ENCODE measurements at regions of chr9 and their contacts with region 1.

Region 1: DNA sequence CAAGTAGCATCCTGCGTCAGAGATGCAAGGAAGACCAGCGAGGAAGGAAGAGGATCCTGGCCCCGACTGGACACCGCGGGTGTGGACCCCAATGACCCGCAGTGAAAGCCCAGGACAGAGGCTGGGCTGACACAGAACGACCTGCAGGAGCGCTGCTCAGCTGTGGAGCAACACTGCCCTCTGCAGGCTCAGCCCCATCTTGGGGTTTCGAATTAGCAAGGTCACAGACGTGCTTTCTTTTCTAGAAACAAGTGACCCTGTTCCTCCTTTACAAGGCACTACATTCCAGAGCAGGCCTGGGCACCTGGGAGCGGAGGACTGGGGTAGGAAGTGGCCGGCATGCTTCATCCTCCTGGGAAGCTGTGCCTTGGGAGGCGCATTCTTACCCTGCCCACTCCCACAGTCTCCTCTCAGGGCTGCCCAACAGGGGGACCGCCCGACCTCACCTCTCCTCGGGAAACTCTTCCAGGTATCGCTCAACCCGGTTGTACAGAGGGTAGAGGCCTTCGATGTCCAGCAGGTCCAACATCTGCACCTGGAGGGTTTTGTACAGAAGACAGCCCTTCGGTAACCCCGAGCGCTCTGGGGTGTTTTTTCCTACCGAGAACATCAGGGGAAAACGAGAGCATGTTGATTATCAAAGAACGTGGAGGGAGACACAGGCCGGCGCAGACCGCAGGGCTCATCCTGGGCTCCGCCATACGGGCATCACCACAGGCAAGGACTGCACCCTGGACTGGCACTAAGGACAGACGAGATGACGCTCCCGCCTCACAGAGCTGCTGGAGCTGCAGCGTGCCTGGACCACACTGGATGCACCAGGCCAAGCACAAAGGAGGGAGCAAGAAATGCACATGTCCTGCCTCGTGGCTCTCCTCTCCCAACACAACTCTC is 35.0 kb downstream of the IPPK start:
- DNase-seq: peak; percentile 78 to 92
- ATAC-seq: peak; percentile 96 to 98
- H3K4me3 ChIP-seq: no peak overlapping the region
- H3K27ac ChIP-seq: no peak overlapping the region
- H3K4me1 ChIP-seq: no peaks in the 10 kb centered on the region
- CTCF ChIP-seq: peak; percentile 95
- EP300 ChIP-seq: no peak
- POLR2A ChIP-seq: no peak
- RAD21 ChIP-seq: peak; percentile 92 to 93

Region 2: GRCh38 chr9:92133949-92134604 is 500.9 kb before region 1 on chr9:
- CTCF ChIA-PET with region 1: interaction called, 129 read pairs
- POLR2A ChIA-PET with region 1: no interaction called
- DNase-seq: peak; percentile 85 to 88
- ATAC-seq: peak; percentile 78 to 89
- H3K4me3 ChIP-seq: peak overlapping the region; percentile 19; the same call in 1 of the 3 replicates
- H3K27ac ChIP-seq: peak overlapping the region; percentile 37 to 73; a peak in 4 of 6 replicates
- H3K4me1 ChIP-seq: peaks cover 5% of the 10 kb centered on the region; the same call in 1 of the 3 replicates
- CTCF ChIP-seq: peak; percentile 85
- EP300 ChIP-seq: no peak
- POLR2A ChIP-seq: no peak
- RAD21 ChIP-seq: peak; percentile 86 to 89

Region 3: GRCh38 chr9:92325269-92325990 is 309.5 kb before region 1 on chr9 and contains the starts of genes CENPP and NOL8:
- CTCF ChIA-PET with region 1: interaction called, 23 read pairs
- POLR2A ChIA-PET with region 1: no interaction called
- DNase-seq: peak; percentile 89 to 91
- ATAC-seq: peak; percentile 96
- H3K4me3 ChIP-seq: peak within 1 kb of the TSS; percentile 60
- H3K27ac ChIP-seq: peak within 1 kb of the TSS; percentile 98 to 99
- H3K4me1 ChIP-seq: peaks cover 17% of the 10 kb centered on the region
- CTCF ChIP-seq: no peak
- EP300 ChIP-seq: no peak
- POLR2A ChIP-seq: peak; percentile 81
- RAD21 ChIP-seq: no peak
- polyA plus RNA-seq, gene CENPP: 13.4 and 15.5 TPM in 2 replicates
- polyA plus RNA-seq, gene NOL8: 30.2 and 47.2 TPM in 2 replicates

Region 4: GRCh38 chr9:92342825-92343488 is 292.0 kb before region 1 on chr9:
- CTCF ChIA-PET with region 1: interaction called, 18 read pairs
- POLR2A ChIA-PET with region 1: no interaction called
- DNase-seq: no peak
- ATAC-seq: no peak
- H3K4me3 ChIP-seq: no peak overlapping the region
- H3K27ac ChIP-seq: no peak overlapping the region
- H3K4me1 ChIP-seq: no peaks in the 10 kb centered on the region
- CTCF ChIP-seq: peak; percentile 27; the same call in 2 of the 3 replicates
- EP300 ChIP-seq: no peak
- POLR2A ChIP-seq: no peak
- RAD21 ChIP-seq: peak in 1 of 2 experiments; percentile 43; a peak in 3 of 5 replicates

Region 5: DNA sequence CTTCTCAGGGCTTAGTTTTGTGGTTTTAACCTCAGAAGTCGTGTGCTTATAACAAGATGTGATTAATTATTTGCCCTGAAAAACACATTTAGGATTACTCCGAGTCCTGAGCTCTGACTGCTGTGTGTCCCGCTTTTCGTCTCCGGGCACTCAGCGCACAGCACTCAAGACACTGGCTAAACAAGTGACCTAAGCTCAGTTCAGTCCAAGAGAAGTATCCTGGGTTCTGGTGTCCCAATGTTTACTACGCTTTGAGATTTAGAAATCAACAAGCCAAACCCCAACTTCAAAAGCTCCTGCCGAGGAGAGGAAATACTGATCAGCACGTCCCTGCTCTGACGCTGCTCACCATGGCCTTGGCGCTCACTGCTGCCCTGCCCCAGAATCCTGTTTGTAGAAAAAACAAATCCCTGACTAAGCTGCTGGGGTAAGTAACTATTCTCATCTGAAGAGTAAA is 18.3 kb before region 1 on chr9:
- CTCF ChIA-PET with region 1: interaction called, 30 read pairs
- POLR2A ChIA-PET with region 1: no interaction called
- DNase-seq: no peak
- ATAC-seq: no peak
- H3K4me3 ChIP-seq: no peak overlapping the region
- H3K27ac ChIP-seq: no peak overlapping the region
- H3K4me1 ChIP-seq: no peaks in the 10 kb centered on the region
- CTCF ChIP-seq: no peak
- EP300 ChIP-seq: no peak
- POLR2A ChIP-seq: no peak
- RAD21 ChIP-seq: no peak

Region 6: DNA sequence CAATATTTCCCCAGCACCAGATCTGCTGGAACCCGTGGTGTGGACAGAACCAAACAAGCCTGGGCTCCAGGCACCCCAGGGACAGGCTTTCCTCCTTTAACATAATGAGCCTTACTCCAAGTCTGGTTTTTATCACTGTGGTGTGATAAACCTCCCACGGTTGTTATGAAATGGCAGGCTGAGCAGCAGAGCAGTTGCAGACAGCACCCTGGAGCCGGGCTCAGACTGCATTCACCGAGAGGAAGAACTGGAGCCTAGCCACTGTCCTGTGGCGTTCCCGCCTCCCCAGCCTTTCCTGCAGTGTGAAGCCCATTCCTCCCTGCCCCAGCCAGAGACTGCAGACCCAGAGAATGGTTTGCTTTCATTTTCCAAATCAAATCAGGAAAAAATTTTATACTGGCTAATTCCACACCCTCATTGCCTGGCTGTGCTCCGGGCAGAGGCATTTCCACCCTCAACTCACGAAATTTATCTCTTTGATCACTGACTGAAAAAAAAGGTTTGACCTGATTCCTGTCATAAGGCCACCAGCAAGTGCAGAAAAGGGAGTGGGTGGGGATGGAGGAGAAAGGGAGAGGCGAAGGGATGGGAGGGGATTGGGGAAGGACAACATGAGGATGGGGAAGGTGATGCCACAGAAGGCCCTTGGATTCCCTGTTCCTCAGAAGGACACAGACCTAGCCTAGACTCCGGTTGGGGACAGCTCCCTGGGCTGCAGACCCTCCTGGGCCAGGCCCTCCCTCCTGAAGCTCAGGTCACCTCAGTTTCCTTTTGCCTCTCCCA is 16.1 kb after region 1 on chr9:
- CTCF ChIA-PET with region 1: interaction called, 25 read pairs
- POLR2A ChIA-PET with region 1: no interaction called
- DNase-seq: no peak
- ATAC-seq: no peak
- H3K4me3 ChIP-seq: no peak overlapping the region
- H3K27ac ChIP-seq: no peak overlapping the region
- H3K4me1 ChIP-seq: no peaks in the 10 kb centered on the region
- CTCF ChIP-seq: no peak
- EP300 ChIP-seq: no peak
- POLR2A ChIP-seq: no peak
- RAD21 ChIP-seq: no peak

Region 7: DNA sequence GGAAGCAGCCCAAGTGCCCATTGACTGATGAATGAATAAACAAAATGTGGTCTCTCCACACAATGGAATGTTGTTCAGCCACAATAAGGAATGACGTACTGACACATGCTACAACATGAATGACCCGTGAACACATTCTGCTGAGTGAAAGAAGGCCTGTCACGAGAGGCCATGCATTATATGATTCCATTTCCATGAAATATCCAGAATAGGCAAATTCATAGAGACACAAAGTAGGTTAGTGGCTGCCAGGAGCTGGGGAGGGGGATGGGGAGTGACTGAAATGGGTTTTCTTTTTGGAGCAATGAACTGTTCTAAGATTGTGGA is 88.3 kb after region 1 on chr9:
- CTCF ChIA-PET with region 1: no interaction called
- POLR2A ChIA-PET with region 1: no interaction called
- DNase-seq: no peak
- ATAC-seq: no peak
- H3K4me3 ChIP-seq: no peak overlapping the region
- H3K27ac ChIP-seq: no peak overlapping the region
- H3K4me1 ChIP-seq: no peaks in the 10 kb centered on the region
- CTCF ChIP-seq: no peak
- EP300 ChIP-seq: no peak
- POLR2A ChIP-seq: no peak
- RAD21 ChIP-seq: no peak